ENCODE measurements at regions of chr3 and their contacts with region 1.

Region 1: GRCh38 chr3:183188895-183189462 is 26.4 kb upstream of the LAMP3 start:
- DNase-seq: peak; percentile 50 to 54
- H3K4me3 ChIP-seq: no peak overlapping the region
- H3K27ac ChIP-seq: no peak overlapping the region
- H3K4me1 ChIP-seq: no peaks in the 10 kb centered on the region
- H3K27me3 ChIP-seq: no peaks in the 10 kb centered on the region
- CTCF ChIP-seq: peak in 3 of 6 experiments; percentile 25 to 49 (median 32)
- POLR2A ChIP-seq: no peak

Region 2: DNA sequence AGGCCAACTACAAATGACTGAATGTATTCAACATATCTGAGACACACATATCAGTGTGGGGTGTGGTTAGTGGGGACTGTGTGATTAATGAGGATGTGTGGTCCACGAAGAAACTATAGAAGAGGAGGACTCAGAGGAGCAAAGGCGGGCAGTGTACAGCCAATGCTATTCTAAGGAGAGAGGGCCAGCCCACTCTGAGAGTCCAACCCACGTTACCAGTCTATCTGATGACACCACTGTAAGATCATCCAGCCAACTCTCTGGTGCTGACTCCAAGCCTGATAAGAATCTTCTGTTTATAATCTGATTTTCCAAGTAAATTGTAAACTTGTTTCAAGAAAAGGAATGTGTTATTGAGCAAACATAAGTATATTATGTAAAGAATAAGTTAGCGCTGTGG is 192.2 kb after region 1 on chr3:
- intact Hi-C with region 1: loop called (anchors 5 kb)
- DNase-seq: no peak
- H3K4me3 ChIP-seq: no peak overlapping the region
- H3K27ac ChIP-seq: no peak overlapping the region
- H3K4me1 ChIP-seq: no peaks in the 10 kb centered on the region
- H3K27me3 ChIP-seq: no peaks in the 10 kb centered on the region
- CTCF ChIP-seq: no peak
- POLR2A ChIP-seq: no peak

Region 3: DNA sequence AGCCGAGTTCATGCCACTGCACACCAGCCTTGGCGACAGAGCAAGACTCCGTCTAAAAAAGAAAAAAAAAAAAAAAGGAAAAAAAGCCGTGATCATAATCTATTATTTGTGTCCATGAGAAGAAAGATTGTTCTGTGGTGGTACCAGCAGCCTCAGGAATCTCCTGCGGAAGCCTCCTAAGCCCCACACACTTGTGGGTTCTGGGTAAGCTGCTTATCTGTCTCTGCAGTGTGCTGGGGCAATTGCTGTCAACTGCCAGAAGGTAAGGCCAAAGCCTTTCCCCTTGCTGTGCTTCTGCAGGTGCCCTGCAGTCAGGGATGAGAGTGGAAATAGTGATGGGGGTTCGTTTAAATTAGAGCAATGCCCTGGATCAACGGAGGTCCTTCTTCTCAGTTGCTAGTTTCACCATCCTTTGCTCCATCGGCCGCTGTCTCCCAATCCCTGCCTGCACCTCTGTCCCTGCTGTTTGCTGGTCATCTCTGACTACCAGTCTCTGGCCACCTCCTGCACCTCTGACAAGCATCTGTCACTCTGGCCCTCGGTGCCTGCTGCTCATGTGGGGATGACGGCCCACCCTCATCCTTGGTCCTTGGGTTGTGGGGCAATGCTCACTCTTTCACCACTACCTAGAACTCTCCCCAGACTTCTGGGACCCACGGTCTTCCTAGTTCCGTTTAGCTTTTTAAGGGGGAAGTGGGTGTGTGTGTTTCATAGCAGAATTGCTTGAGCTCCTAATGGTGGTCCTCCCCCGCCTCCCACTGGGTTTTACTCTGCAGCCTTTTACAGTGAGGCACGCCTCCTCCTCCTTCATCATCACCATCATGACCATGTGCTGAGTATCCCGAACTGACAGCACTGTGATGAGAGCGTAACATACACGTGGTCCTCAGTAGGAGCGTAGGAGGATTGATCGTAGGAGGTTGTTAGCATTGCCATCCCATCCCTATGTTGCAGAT is 1216.4 kb after region 1 on chr3:
- intact Hi-C with region 1: no loop called
- DNase-seq: no peak
- H3K4me3 ChIP-seq: no peak overlapping the region
- H3K27ac ChIP-seq: no peak overlapping the region
- H3K4me1 ChIP-seq: no peaks in the 10 kb centered on the region
- H3K27me3 ChIP-seq: no peaks in the 10 kb centered on the region
- CTCF ChIP-seq: no peak
- POLR2A ChIP-seq: no peak

Measured in thyroid gland (tissue), 4 donors.